Ovary (tissue), 10 donors: ENCODE measurements at regions of chr2 and their contacts with region 1.

Region 1: DNA sequence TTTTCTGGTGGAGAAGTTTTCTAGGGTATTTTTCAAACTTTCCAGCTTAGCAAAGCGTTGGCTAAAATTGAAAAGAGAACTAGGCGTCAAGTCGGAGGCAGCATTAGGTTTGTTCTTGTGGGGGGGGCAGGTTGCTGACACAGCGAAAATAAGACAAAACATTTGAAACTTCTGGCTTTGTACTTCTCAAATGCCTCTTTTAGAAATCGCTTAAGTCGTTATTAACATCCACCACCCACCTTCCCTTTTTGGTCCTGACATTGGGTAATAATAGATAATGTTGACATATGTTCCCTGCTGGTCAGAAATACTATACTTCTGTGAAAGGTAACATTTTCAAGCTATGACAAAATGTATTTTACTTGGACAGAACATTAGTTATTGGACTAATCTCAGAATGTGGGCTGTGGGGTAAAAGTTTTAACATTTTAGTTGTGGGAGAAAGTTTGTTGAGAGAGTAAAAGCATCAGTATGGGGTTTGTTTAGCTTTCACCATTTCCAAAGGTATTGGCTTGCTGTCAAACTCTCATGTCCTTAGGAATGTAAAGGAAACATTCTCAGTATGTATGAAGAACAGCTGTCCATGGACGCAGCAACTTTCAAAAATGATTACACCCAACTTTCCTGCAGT is 88.1 kb upstream of the ZEB2 start:
- DNase-seq: peak in 1 of 5 donors; percentile 20
- H3K4me3 ChIP-seq: no peak overlapping the region
- H3K27ac ChIP-seq: no peak overlapping the region
- H3K4me1 ChIP-seq: no peaks in the 10 kb centered on the region
- H3K27me3 ChIP-seq: no peaks in the 10 kb centered on the region
- CTCF ChIP-seq: no peak
- EP300 ChIP-seq: no peak
- POLR2A ChIP-seq: no peak

Region 2: DNA sequence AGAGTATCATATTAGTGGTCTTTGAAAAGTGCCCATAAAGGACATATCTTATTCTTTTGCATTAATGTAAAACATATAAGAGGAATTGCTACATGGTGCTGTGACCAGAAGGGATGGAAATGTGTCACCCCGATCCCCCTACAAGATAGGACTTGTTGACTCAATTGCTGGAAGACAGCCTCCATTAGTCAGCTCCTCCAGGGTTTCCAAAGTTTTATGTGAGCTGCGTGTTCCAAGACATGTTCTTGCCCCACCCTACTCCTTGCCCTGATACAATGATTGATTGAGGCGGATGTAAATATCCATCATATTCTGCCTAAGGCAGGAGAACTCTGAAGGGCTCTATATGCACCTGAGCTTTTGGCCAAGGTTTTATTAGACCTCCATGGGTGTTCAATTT is 452.9 kb after region 1 on chr2:
- intact Hi-C with region 1: no loop called
- DNase-seq: no peak
- H3K4me3 ChIP-seq: no peak overlapping the region
- H3K27ac ChIP-seq: no peak overlapping the region
- H3K4me1 ChIP-seq: no peaks in the 10 kb centered on the region
- H3K27me3 ChIP-seq: no peaks in the 10 kb centered on the region
- CTCF ChIP-seq: no peak
- EP300 ChIP-seq: no peak
- POLR2A ChIP-seq: no peak

Region 3: GRCh38 chr2:145777297-145777696 is 1169.3 kb after region 1 on chr2:
- intact Hi-C with region 1: loop called in 1 of 4 experiments (anchors 5 kb)
- DNase-seq: no peak
- H3K4me3 ChIP-seq: no peak overlapping the region
- H3K27ac ChIP-seq: no peak overlapping the region
- H3K4me1 ChIP-seq: no peaks in the 10 kb centered on the region
- H3K27me3 ChIP-seq: no peaks in the 10 kb centered on the region
- CTCF ChIP-seq: no peak
- EP300 ChIP-seq: no peak
- POLR2A ChIP-seq: no peak